ENCODE measurements at regions of chr4 and their contacts with region 1.

Region 1: GRCh38 chr4:159077702-159078495 is 25.0 kb upstream of the RAPGEF2 start:
- DNase-seq: no peak
- ATAC-seq: peak; percentile 91
- H3K4me3 Mint-ChIP-seq: peak overlapping the region; percentile 73
- H3K27ac Mint-ChIP-seq: peak overlapping the region; percentile 63
- H3K4me1 Mint-ChIP-seq: peaks cover 23% of the 10 kb centered on the region
- H3K27me3 Mint-ChIP-seq: no peaks in the 10 kb centered on the region
- CTCF ChIP-seq: no peak

Region 2: DNA sequence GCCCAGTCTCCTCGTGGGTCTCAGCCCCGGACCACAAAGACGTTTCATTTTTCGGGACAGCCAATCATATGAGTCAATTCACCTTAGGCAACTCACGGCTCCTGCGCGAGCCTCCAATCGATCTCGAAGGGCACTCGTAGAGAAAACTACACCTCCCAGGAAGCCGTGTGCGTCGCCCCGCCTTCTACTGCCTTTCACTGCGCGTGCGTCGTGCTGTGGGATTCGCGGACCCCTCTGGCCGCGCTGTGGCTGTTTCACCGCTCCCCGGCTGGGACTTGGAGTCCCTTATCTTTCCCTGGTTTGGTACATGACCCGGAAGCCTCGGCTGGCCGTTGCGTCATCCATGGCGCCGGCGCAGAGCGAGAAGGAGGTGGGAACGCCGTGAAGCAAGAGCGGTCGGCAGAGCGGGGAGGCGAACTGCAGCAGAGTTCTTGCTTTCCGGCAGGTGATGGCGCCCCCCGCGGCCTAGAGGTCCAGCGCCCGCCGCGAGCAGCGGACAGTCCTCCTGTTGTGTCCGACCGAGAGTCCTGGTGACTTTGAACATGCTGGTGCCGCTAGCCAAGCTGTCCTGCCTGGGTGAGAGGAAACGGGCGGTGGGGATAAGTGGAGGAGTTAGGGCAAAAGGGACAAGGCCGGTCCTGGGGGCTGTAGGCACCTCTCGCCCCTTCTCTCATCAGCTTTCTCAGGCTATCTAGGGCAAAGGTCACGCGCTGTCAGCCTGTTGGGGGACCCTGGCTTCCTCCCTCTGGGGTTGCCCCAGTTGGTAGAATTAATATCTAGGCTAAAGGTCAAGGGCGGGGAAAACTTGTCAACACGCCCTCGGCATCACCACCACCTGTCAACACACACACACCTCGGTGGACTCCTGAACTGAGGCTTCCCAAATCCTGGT is 405.7 kb before region 1 on chr4 and contains the start of gene ETFDH:
- CTCF ChIA-PET with region 1: no interaction called
- POLR2A ChIA-PET with region 1: no interaction called
- intact Hi-C with region 1: loop called (anchors 1 kb)
- DNase-seq: peak; percentile 95
- ATAC-seq: peak; percentile 83
- H3K4me3 Mint-ChIP-seq: peak within 1 kb of the TSS; percentile 98
- H3K27ac Mint-ChIP-seq: peak within 1 kb of the TSS; percentile 96
- H3K4me1 Mint-ChIP-seq: peaks cover 23% of the 10 kb centered on the region
- H3K27me3 Mint-ChIP-seq: no peaks in the 10 kb centered on the region
- CTCF ChIP-seq: no peak
- total RNA-seq, gene ETFDH: 12.0 and 15.4 TPM in 2 replicates

Region 3: DNA sequence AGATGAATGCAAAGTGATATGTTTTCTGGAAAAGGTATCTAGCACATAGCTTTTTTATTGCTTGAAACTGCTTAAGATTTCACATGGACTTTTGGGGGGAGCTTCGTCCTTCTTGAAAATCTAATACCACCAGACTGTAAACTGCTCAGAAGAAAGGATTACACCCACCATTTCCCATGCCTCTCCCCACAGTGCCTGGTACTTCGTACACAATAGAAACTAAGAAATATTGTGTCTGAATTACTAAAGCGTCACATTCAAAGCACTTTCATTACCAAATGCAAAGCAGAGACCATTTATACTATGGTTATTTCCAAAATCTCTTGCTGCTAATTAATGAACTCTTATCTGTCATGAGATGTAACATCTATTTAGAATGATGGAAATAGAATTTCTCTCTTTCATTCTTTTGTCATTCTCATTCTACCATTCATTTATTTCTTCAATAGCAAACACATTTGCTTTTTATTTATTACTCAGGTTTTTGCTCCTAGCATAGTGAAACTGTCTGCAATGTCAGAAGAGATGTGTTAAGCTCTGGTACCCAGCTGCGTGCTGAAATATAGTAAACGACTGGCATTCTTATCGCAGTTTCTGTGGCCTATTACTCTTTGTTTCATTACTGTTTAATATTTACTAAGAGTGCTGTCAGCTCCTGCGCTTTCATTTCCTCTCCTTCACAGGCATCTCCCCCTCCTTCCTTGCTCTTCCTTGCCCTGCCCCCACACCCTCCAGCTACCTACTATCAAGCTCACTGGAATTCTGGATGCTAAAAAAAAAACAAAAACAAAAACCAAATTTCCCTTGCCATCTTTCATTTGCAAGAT is 26.4 kb before region 1 on chr4:
- CTCF ChIA-PET with region 1: no interaction called
- POLR2A ChIA-PET with region 1: interaction called, 9 read pairs
- intact Hi-C with region 1: loop called (anchors 1 kb)
- DNase-seq: no peak
- ATAC-seq: peak; percentile 51
- H3K4me3 Mint-ChIP-seq: peak overlapping the region; percentile 56
- H3K27ac Mint-ChIP-seq: peak overlapping the region; percentile 63
- H3K4me1 Mint-ChIP-seq: peaks cover 19% of the 10 kb centered on the region
- H3K27me3 Mint-ChIP-seq: peaks cover 40% of the 10 kb centered on the region
- CTCF ChIP-seq: no peak

Region 4: GRCh38 chr4:159582685-159583084 is 504.8 kb after region 1 on chr4:
- CTCF ChIA-PET with region 1: no interaction called
- POLR2A ChIA-PET with region 1: no interaction called
- intact Hi-C with region 1: no loop called
- DNase-seq: no peak
- ATAC-seq: no peak
- H3K4me3 Mint-ChIP-seq: no peak overlapping the region
- H3K27ac Mint-ChIP-seq: no peak overlapping the region
- H3K4me1 Mint-ChIP-seq: no peaks in the 10 kb centered on the region
- H3K27me3 Mint-ChIP-seq: no peaks in the 10 kb centered on the region
- CTCF ChIP-seq: no peak

Measured in activated B cell treated with CpG ODN at 0.5 μM for 24 hours (primary cell).